ENCODE measurements at regions of chr12 and their contacts with region 1.

Region 1: GRCh38 chr12:75526655-75527511 is 15.5 kb upstream of the KRR1 start:
- DNase-seq: no peak
- H3K4me3 ChIP-seq: no peak overlapping the region
- H3K27ac ChIP-seq: no peak overlapping the region
- H3K4me1 ChIP-seq: peaks cover 0 to 7% (median 0%) of the 10 kb centered on the region in 3 donors
- H3K27me3 ChIP-seq: peaks cover 0 to 3% (median 0%) of the 10 kb centered on the region in 4 donors
- CTCF ChIP-seq: peak; percentile 50 to 77 (median 68)
- POLR2A ChIP-seq: no peak

Region 2: DNA sequence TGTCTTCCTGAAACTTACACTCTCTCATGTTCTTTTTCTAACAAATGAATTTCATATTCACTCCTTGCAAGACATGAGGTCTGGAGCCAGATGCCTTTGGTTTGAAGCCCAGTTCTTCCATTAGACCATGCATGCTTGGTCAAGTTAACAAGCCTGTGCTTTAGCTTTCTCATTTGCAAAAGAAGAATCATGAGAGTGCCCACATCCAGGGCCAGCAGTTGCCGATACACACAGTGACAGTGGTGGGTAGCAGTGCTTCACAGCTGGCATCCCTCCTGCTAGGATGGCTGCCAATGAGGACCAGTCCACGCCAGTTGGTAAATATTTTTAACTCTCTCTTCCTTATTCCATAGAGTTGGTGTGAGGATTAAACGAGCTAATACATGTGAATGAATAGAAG is 341.6 kb after region 1 on chr12:
- intact Hi-C with region 1: no loop called
- DNase-seq: no peak
- H3K4me3 ChIP-seq: no peak overlapping the region
- H3K27ac ChIP-seq: no peak overlapping the region
- H3K4me1 ChIP-seq: peaks cover 0 to 20% (median 0%) of the 10 kb centered on the region in 3 donors
- H3K27me3 ChIP-seq: no peaks in the 10 kb centered on the region
- CTCF ChIP-seq: no peak
- POLR2A ChIP-seq: no peak

Region 3: GRCh38 chr12:76037130-76038103 is 510.5 kb after region 1 on chr12:
- intact Hi-C with region 1: loop called (anchors 5 kb)
- DNase-seq: no peak
- H3K4me3 ChIP-seq: no peak overlapping the region
- H3K27ac ChIP-seq: no peak overlapping the region
- H3K4me1 ChIP-seq: peaks cover 0 to 26% (median 5%) of the 10 kb centered on the region in 3 donors
- H3K27me3 ChIP-seq: no peaks in the 10 kb centered on the region
- CTCF ChIP-seq: peak; percentile 46 to 92 (median 84)
- POLR2A ChIP-seq: no peak